GM12878 (cell line): ENCODE measurements at regions of chr3 and their contacts with region 1.

Region 1: GRCh38 chr3:14947886-14948555 is 638 bp downstream of the NR2C2 start:
- DNase-seq: peak; percentile 73
- ATAC-seq: peak; percentile 95
- H3K4me3 ChIP-seq: peak overlapping the region; percentile 72
- H3K27ac ChIP-seq: peak overlapping the region; percentile 98
- H3K4me1 ChIP-seq: peaks cover 3% of the 10 kb centered on the region
- H3K27me3 ChIP-seq: no peaks in the 10 kb centered on the region
- CTCF ChIP-seq: no peak
- EP300 ChIP-seq: peak in 1 of 2 experiments; percentile 36; a peak in 1 of 4 replicates
- POLR2A ChIP-seq: peak; percentile 66
- RAD21 ChIP-seq: no peak

Region 2: GRCh38 chr3:14988988-14989394 is 41.0 kb after region 1 on chr3:
- CTCF ChIA-PET with region 1: interaction called, 7 read pairs
- POLR2A ChIA-PET with region 1: interaction called, 3 read pairs
- RAD21 ChIA-PET with region 1: interaction called, 5 read pairs
- SMC1A ChIA-PET with region 1: interaction called, 3 read pairs
- in situ Hi-C with region 1: no loop called
- intact Hi-C with region 1: loop called (anchors 2 kb)
- DNase-seq: peak; percentile 87
- ATAC-seq: peak; percentile 100
- H3K4me3 ChIP-seq: no peak overlapping the region; the same call in 1 of the 2 replicates
- H3K27ac ChIP-seq: peak overlapping the region; percentile 19
- H3K4me1 ChIP-seq: no peaks in the 10 kb centered on the region
- H3K27me3 ChIP-seq: no peaks in the 10 kb centered on the region
- CTCF ChIP-seq: peak; percentile 45 to 68 (median 58)
- EP300 ChIP-seq: peak in 1 of 2 experiments; percentile 66; a peak in 2 of 4 replicates
- POLR2A ChIP-seq: peak; percentile 51; the same call in 1 of the 2 replicates
- RAD21 ChIP-seq: peak; percentile 54; the same call in 1 of the 2 replicates

Region 3: DNA sequence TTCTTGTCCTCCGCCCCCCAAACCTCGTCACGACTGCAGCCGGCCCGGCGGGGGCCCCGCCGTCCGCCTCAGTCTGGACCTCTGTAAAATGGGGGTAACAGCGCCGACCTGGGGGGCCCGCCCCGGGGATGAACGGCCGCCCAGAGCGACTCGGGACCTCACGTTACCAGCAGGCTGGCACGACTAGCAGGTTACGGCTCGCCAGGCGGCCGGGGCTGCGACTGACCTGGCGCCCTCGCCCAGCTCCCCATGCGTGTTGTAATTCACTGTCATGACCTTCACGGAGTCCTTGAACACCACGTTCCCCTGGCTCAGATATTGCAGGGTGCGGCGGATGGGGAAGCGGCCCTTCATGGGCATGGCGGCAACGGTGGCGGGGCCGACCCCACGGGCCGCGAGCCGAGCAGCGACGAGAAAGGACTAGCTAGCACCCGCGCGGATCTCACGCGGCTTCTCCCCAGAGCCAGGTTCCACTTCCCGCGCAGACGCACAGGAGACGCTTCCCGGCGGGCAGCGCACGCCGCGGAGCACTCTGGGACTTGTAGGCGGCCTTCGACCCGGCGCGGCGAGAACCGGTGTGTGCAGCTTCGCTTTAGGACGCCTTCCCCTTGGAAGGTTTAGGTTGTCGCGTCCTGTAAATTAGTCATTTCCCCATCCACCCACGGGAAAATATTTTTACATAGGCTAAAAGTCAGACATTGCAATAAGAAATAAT is 117.0 kb after region 1 on chr3 and contains the start of gene MRPS25:
- CTCF ChIA-PET with region 1: no interaction called
- POLR2A ChIA-PET with region 1: interaction called, 3 read pairs
- RAD21 ChIA-PET with region 1: interaction called, 3 read pairs
- SMC1A ChIA-PET with region 1: interaction called, 3 read pairs
- in situ Hi-C with region 1: no loop called
- intact Hi-C with region 1: loop called (anchors 5 kb)
- DNase-seq: peak; percentile 64
- ATAC-seq: peak; percentile 98
- H3K4me3 ChIP-seq: peak within 1 kb of the TSS; percentile 83
- H3K27ac ChIP-seq: peak within 1 kb of the TSS; percentile 89
- H3K4me1 ChIP-seq: peaks cover 13% of the 10 kb centered on the region
- H3K27me3 ChIP-seq: no peaks in the 10 kb centered on the region
- CTCF ChIP-seq: no peak
- EP300 ChIP-seq: no peak
- POLR2A ChIP-seq: peak; percentile 100
- RAD21 ChIP-seq: no peak
- polyA plus RNA-seq, gene MRPS25: 17.0 to 43.6 TPM